RWPE1 (cell line): ENCODE measurements at regions of chr10 and their contacts with region 1.

Region 1: GRCh38 chr10:121900443-121901174 is 27.2 kb downstream of the ATE1 start:
- DNase-seq: peak; percentile 67
- H3K27ac ChIP-seq: no peak overlapping the region
- CTCF ChIP-seq: peak; percentile 78

Region 2: GRCh38 chr10:121886997-121887622 is 13.5 kb before region 1 on chr10:
- CTCF ChIA-PET with region 1: interaction called, 24 read pairs
- POLR2A ChIA-PET with region 1: no interaction called
- DNase-seq: peak; percentile 76
- H3K27ac ChIP-seq: no peak overlapping the region
- CTCF ChIP-seq: peak; percentile 81

Region 3: GRCh38 chr10:122062831-122063674 is 162.4 kb after region 1 on chr10:
- CTCF ChIA-PET with region 1: no interaction called
- POLR2A ChIA-PET with region 1: no interaction called
- DNase-seq: peak; percentile 95
- H3K27ac ChIP-seq: peak overlapping the region; percentile 95
- CTCF ChIP-seq: no peak